ENCODE measurements at regions of chr1 and their contacts with region 1.

Region 1: GRCh38 chr1:6445062-6445763 is 20.6 kb downstream of the ESPN start:
- DNase-seq: peak; percentile 78
- ATAC-seq: peak; percentile 14
- H3K4me3 Mint-ChIP-seq: no peak overlapping the region
- H3K27ac Mint-ChIP-seq: peak overlapping the region; percentile 58
- H3K4me1 Mint-ChIP-seq: peaks cover 37% of the 10 kb centered on the region
- H3K27me3 Mint-ChIP-seq: peaks cover 17% of the 10 kb centered on the region
- CTCF ChIP-seq: peak; percentile 49; the same call in 1 of the 2 replicates

Region 2: GRCh38 chr1:6464514-6464836 is 19.3 kb after region 1 on chr1:
- CTCF ChIA-PET with region 1: interaction called, 73 read pairs
- POLR2A ChIA-PET with region 1: no interaction called
- DNase-seq: no peak
- ATAC-seq: no peak
- H3K4me3 Mint-ChIP-seq: peak overlapping the region; percentile 13; the same call in 1 of the 2 replicates
- H3K27ac Mint-ChIP-seq: peak overlapping the region; percentile 49; the same call in 1 of the 2 replicates
- H3K4me1 Mint-ChIP-seq: peaks cover 20% of the 10 kb centered on the region
- H3K27me3 Mint-ChIP-seq: peaks cover 2% of the 10 kb centered on the region; the same call in 1 of the 2 replicates
- CTCF ChIP-seq: no peak